ENCODE measurements at regions of chr9 and their contacts with region 1.

Region 1: GRCh38 chr9:33081128-33081851 is 4.8 kb upstream of the SMU1 start:
- DNase-seq: no peak
- ATAC-seq: peak; percentile 67

Region 2: GRCh38 chr9:33225319-33226149 is 144.2 kb after region 1 on chr9:
- intact Hi-C with region 1: loop called (anchors 5 kb)
- DNase-seq: peak; percentile 81
- ATAC-seq: peak; percentile 70